ENCODE measurements at regions of chr12 and their contacts with region 1.

Region 1: GRCh38 chr12:68317047-68317667 is 15.0 kb downstream of the MDM1 start:
- DNase-seq: peak; percentile 37
- H3K4me3 Mint-ChIP-seq: no peak overlapping the region
- H3K27ac Mint-ChIP-seq: no peak overlapping the region
- H3K4me1 Mint-ChIP-seq: no peaks in the 10 kb centered on the region
- H3K27me3 Mint-ChIP-seq: no peaks in the 10 kb centered on the region

Region 2: DNA sequence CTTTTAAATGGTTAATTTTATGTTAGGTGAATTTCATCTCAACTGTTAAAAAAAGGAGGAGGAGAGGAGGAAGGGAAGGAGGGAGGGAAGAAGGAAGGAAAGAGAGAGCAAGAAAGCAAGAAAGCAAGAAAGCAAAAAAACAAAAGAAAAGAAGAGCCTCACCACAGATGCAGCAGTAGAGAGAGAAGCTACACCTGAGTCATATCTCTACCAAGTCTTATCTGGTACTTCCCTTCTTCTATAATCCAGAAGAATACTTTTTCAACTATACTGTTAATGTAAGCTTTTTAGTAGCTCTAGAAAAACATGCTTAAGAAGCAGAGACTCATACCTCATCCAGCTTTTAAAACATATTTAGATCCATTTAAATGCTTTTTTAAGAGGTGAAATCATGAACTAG is 85.9 kb before region 1 on chr12:
- CTCF ChIA-PET with region 1: interaction called, 174 read pairs
- POLR2A ChIA-PET with region 1: interaction called, 3 read pairs
- intact Hi-C with region 1: no loop called
- DNase-seq: no peak
- H3K4me3 Mint-ChIP-seq: no peak overlapping the region
- H3K27ac Mint-ChIP-seq: no peak overlapping the region
- H3K4me1 Mint-ChIP-seq: peaks cover 10% of the 10 kb centered on the region
- H3K27me3 Mint-ChIP-seq: peaks cover 5% of the 10 kb centered on the region

Region 3: DNA sequence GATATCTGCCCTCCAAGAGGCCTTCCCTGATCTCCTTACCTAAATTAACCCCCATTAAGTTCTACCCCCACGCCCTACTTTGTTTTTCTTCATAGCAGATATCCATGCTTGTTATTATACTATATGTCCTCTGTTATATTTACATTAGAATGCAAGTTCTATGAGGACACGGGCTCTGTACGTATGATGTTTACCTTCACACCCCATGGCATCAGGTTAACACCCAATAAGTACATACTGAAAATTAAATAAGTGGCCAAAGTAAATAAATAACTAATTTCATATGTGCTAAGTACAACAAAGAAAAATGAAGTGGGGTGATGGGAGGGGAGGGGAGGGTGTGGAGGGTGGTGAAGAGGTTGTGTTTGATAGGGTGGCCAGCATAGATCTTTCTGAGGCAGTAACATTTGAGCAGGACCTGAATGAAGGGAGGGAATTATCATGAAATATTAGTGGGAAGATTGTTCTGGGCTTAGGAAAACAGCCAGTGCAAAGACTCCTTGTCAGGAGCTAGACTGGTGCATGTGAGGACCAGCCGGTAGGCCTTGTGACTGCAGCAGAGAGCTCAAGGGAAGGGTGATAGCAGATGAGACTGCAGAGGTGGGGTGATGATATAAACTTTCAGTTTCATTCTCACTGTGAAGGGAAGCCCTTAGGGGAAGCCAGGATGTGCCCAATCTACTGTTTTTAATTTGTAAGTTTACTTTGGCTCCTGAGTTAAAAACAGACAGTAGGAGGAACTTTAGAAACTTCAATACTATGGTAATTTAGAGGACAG is 76.4 kb before region 1 on chr12:
- CTCF ChIA-PET with region 1: interaction called, 11 read pairs
- POLR2A ChIA-PET with region 1: no interaction called
- intact Hi-C with region 1: no loop called
- DNase-seq: peak; percentile 72
- H3K4me3 Mint-ChIP-seq: no peak overlapping the region
- H3K27ac Mint-ChIP-seq: peak overlapping the region; percentile 13
- H3K4me1 Mint-ChIP-seq: peaks cover 46% of the 10 kb centered on the region
- H3K27me3 Mint-ChIP-seq: peaks cover 12% of the 10 kb centered on the region

Region 4: DNA sequence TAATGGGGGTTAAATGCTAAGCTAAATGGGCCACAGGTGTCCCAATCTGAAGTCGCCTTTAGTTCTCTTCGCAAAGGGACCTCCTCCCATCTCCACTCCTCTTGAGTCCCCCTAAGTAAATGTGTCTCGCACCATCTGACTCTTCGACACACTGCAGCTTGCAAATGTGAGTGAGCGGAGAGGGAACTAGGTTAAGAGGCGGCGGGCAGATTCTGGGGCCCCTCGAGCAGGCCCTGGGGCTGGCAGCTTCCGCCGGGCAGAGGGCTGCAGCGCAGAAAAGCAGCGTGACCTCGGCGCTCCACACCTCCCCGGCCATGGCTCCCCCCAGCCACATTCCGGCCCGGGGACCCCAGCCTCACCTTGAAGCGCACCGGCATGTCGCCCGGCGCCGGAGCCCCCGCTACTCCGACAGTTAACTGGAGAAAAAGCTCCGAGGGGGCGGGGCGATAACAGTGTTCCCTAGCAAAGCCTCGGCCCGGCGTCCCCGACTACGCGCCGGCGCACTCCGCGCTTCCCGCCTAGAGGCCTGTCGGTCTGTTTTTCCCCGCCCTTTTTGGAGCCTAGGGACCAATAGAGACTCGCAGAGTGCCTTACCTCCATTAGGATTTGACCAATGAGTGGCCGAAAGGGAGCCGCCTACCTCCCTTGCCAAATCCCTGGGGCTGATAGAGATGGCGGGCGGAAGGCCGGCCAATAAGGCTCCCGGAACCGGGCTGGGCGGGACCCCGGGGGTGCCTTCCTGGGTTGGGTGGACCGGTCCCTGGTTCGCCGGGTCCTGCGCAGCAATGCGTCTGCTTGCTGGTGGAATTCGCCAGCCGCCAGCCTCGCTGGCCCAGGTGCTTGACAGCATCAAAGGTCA is 14.9 kb after region 1 on chr12 and contains the start of gene MDM1:
- CTCF ChIA-PET with region 1: interaction called, 18 read pairs
- POLR2A ChIA-PET with region 1: no interaction called
- intact Hi-C with region 1: no loop called
- DNase-seq: peak; percentile 97
- H3K4me3 Mint-ChIP-seq: peak within 1 kb of the TSS; percentile 85
- H3K27ac Mint-ChIP-seq: peak within 1 kb of the TSS; percentile 71
- H3K4me1 Mint-ChIP-seq: peaks cover 31% of the 10 kb centered on the region
- H3K27me3 Mint-ChIP-seq: peaks cover 2% of the 10 kb centered on the region
- total RNA-seq, gene MDM1: 13.8 to 15.6 TPM

Region 5: DNA sequence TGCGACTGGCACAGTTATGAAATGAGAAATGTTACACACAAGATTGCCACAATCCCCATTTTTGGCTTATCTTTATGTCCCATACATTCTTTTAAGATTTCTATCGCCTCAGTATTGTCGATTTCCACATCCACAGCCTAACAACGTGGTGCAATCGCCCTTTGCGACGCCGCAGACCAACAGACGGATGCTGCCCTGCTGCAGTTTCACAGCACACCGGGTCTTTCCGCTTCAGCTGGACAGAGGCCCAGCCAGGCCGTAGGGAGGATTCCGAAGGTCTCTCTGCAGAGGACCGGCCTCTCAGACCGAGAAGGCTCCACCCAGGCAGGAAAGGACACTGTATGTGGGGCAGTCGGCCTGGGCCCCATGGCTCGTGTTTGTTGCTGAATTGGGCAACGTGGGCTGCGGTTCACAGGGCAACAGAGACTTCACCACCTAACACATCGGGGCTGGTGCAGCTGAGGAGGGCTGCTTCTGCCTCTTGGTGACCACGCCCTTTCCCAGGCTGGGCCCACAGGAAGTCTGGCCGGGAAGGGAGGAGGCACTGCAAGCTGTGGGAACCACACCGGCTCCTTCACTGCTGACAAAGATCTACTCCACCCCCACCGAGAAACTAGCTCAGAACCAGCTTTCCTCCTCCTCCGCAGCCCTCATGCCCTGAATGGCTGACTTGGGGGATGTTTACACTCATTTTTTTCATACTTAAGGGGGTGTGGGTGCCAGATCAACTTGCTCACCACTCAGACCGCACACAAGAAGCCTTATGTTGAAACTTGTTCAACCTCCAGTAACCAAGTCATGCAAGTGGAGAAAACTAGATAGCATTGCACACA is 48.0 kb after region 1 on chr12:
- CTCF ChIA-PET with region 1: no interaction called
- POLR2A ChIA-PET with region 1: no interaction called
- intact Hi-C with region 1: no loop called
- DNase-seq: peak; percentile 94
- H3K4me3 Mint-ChIP-seq: peak overlapping the region; percentile 79
- H3K27ac Mint-ChIP-seq: peak overlapping the region; percentile 92
- H3K4me1 Mint-ChIP-seq: peaks cover 53% of the 10 kb centered on the region
- H3K27me3 Mint-ChIP-seq: no peaks in the 10 kb centered on the region